Mammary epithelial cell (primary cell): ENCODE measurements at regions of chr19 and their contacts with region 1.

Region 1: DNA sequence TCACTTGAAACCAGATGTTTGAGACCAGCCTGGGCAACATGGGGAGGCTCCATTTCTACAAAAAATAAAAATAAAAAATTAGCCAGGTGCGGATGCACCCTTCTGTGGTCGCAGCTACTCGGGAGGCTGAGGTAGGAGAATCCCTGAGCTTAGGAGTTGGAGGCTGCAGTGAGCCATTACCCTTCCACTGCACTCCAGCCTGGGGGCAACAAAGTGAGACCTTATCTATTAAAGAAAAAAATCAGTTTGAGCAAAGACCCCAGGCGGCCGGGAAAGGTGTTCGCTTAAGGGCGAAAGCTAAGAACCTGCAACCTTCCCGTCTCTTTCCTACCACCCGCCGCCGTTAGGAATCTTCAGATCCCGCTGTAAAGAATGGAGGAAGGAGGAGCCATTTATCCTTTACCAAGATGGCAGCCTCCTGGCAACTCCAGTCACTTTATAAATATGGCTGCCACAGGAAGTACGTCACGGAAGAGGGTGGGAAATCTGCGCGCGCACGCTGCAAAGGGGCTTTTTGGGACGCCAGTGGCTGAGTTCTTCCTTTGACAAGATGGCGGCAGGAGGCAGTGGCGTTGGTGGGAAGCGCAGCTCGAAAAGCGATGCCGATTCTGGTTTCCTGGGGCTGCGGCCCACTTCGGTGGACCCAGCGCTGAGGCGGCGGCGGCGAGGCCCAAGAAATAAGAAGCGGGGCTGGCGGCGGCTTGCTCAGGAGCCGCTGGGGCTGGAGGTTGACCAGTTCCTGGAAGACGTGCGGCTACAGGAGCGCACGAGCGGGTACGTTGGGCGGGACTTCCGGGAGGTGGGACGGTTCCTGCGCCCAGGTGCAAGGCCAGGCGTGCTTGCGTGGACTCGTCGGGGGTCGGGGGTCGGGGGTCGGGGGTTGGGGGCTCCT is at the start of gene NOP53:
- DNase-seq: peak; percentile 94
- H3K4me3 ChIP-seq: peak within 1 kb of the TSS; percentile 63 to 84 (median 76)
- H3K27ac ChIP-seq: peak within 1 kb of the TSS; percentile 72
- H3K4me1 ChIP-seq: peaks cover 19% of the 10 kb centered on the region
- H3K27me3 ChIP-seq: no peaks in the 10 kb centered on the region
- CTCF ChIP-seq: no peak
- total RNA-seq, gene NOP53: 87.4 to 106 TPM

Region 2: GRCh38 chr19:47697863-47698609 is 47.2 kb before region 1 on chr19:
- CTCF ChIA-PET with region 1: no interaction called
- dilution Hi-C with region 1: no loop called
- in situ Hi-C with region 1: no loop called
- intact Hi-C with region 1: no loop called
- DNase-seq: peak; percentile 72
- H3K4me3 ChIP-seq: no peak overlapping the region
- H3K27ac ChIP-seq: no peak overlapping the region
- H3K4me1 ChIP-seq: no peaks in the 10 kb centered on the region
- H3K27me3 ChIP-seq: no peaks in the 10 kb centered on the region
- CTCF ChIP-seq: peak; percentile 99

Region 3: DNA sequence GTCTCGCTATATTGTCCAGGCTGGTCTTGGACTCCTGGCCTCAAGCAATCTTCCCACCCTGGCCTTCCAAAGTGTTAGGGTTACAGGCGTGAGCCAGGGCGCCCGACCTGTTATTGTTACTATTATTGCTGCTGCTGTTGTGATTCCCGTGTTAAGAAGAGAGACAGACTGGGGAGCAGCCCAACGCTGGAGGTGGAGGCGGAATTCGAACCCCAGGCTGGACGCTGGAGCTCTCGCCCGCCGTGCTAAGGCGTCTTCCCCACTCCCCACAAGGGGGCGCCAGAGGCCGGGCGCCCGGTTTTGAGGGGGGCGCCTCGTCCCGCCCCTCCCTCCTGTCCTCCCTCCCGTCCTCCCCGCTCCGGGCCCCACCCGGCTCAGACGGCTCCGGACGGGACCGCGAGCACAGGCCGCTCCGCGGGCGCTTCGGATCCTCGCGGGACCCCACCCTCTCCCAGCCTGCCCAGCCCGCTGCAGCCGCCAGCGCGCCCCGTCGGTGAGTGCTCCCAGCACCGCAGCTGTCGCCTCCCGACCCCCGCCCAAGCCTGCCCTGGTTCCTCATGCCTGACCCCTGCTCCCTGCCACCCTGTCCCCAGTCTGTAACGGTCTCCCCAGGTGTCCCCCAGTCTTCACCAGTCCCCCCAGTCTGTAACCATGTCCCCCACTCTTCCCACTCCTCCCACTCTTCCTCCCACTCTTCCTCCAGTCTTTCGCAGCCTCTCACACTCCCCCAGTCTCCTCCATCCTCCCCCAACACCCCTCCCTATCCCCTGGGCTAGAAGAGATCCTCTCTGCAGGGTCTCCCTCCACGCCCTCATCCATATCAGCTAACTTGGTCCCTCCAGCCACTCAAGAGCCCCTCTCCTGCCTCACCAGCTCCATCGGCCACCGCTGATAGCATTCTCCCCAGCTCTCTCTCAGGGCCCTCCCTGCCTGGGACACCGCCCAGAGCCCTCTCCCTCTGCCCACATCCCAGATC is 31.9 kb before region 1 on chr19 and contains the start of gene EHD2:
- CTCF ChIA-PET with region 1: interaction called, 3 read pairs
- dilution Hi-C with region 1: no loop called
- in situ Hi-C with region 1: loop called in 1 of 2 experiments (anchors 5 kb)
- intact Hi-C with region 1: loop called (anchors 1 kb)
- DNase-seq: peak; percentile 68
- H3K4me3 ChIP-seq: peak within 1 kb of the TSS; percentile 84 to 97 (median 84)
- H3K27ac ChIP-seq: peak within 1 kb of the TSS; percentile 58
- H3K4me1 ChIP-seq: peaks cover 17% of the 10 kb centered on the region
- H3K27me3 ChIP-seq: no peaks in the 10 kb centered on the region
- CTCF ChIP-seq: peak; percentile 62 to 96
- total RNA-seq, gene EHD2: 111 to 178 TPM

Region 4: DNA sequence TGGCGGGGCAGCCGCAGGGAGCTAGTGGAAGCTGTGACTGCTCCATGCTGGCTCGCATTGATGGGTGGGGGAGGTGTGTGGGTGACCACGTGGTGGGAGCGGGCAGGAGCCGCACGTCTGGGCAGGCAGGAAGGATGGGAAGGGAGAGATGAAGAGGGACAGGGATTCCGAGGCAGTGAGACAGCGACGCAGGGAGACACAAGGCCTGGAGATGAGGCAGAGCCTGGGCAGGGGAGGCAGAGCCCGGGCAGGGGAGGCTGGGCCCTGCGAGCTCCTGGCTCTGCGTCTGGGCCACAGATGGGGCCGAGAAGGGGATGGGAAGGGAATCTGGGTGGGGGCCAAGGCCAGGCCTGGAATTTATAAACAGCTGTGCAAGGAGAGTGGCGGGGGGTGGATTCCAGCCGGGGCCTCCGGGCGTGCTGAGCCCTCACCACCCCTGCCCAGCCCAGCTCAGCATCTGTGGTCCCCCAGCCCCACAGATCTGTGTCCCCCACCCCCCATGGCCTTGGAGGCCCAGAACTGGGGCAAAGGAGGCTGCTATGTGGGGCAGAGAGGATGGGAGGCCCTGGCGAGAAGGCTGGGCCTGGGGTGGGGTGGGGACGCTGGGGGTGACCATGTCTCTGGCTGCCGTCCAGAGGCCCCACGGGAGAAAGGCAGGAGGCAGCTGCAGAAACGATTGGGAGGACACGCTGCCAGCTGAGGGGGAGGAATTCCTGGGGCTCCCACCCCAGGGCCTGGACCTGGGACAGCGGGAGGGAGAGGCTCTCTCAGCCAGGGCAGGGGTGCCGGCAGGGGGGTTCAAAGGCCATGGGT is 26.0 kb before region 1 on chr19:
- CTCF ChIA-PET with region 1: interaction called, 5 read pairs
- dilution Hi-C with region 1: no loop called
- in situ Hi-C with region 1: loop called in 1 of 2 experiments (anchors 5 kb)
- intact Hi-C with region 1: loop called (anchors 1 kb)
- DNase-seq: peak; percentile 95
- H3K4me3 ChIP-seq: peak overlapping the region; percentile 0 to 36 (median 32)
- H3K27ac ChIP-seq: peak overlapping the region; percentile 65
- H3K4me1 ChIP-seq: peaks cover 42% of the 10 kb centered on the region
- H3K27me3 ChIP-seq: no peaks in the 10 kb centered on the region
- CTCF ChIP-seq: no peak

Region 5: DNA sequence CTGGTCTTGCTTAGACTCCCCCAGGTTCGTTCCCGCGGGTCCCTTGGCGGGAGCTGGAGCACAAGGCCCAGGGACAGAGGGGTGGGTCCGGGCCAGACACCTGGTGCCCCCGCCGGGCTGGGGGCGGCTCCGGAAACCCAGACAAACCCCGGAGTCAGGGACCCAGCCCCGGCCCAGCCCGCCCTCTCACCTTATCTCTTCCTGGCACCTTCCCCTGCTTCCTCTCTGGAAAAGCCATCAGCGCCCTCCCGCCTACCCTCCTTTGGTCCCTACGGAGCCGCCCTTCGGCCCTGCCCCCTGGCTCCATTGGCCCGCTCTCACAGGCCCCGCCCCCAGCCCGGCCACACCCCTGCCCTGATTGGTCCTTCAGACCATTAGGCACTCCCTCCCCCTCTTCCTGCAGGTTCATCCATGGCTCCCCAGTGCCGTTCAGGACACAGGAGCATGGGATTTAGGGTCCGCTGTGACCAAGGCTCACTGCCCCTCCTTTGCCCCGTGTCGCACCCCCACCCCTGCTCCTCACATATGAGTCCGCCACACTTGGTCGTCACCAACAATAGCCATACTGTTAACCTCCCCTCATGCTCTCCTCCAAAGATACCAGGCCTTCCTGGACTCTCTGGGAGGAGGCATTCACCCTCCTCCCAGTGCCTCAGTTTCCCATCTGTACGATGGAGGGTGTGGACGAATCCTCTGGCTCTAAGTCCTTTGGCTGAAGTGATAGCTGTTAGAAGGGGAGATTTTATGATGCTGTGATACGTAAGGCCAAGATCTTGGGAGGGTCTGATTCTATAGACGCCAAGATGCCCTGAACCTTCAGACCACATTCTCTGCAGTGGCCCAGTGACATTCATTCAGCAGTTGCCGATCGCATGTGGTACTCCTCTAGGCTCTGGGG is 15.0 kb before region 1 on chr19:
- CTCF ChIA-PET with region 1: no interaction called
- dilution Hi-C with region 1: no loop called
- in situ Hi-C with region 1: no loop called
- intact Hi-C with region 1: loop called (anchors 1 kb)
- DNase-seq: peak; percentile 52
- H3K4me3 ChIP-seq: peak overlapping the region; percentile 42 to 49 (median 45)
- H3K27ac ChIP-seq: peak overlapping the region; percentile 77
- H3K4me1 ChIP-seq: peaks cover 42% of the 10 kb centered on the region
- H3K27me3 ChIP-seq: no peaks in the 10 kb centered on the region
- CTCF ChIP-seq: no peak

Region 6: DNA sequence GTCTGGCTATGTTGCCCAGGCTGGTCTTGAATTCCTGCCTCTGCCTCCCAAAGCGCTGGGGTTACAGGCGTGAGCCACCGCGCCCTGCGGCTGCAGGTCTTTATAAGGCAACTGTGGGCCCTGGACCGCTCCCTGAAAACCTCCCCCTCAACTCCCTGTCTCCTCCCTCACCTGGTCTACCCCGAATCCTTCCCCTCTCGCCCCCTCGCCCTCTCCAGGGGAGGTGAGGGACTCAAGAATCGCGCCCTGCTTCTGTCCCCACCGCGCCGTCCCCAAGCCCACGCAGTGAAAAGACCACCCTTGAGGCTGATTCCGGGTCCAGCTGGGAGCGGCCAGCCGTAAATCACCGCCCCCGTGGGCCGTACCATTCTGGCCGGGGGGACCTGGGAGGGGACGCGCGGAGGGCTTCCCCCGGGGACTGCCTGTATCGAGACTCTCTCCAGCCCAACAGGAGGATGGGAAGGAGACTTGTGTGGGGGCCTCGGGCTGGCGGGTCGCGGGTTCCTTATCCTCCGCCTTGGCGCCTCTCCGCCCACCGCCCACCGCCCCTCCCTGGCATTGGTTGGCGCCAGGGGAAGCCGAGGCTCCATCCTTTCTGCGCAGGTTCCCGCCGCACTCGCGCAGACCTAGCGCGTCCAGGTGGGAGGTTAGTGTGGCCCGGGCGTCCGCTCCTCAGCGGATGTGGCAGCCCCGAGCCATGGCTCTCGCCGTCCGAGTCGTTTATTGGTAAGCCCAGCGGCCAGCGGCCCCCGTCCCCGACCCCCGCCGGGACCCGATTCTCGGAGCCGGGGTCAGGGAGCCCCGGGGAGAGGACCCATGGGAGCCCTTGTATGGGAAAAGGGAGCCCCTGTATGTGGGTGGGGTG is 33.1 kb after region 1 on chr19 and contains the start of gene SELENOW:
- CTCF ChIA-PET with region 1: no interaction called
- dilution Hi-C with region 1: no loop called
- in situ Hi-C with region 1: no loop called
- intact Hi-C with region 1: loop called (anchors 1 kb)
- DNase-seq: peak; percentile 81
- H3K4me3 ChIP-seq: peak within 1 kb of the TSS; percentile 84 to 94 (median 88)
- H3K27ac ChIP-seq: peak within 1 kb of the TSS; percentile 88
- H3K4me1 ChIP-seq: peaks cover 7% of the 10 kb centered on the region
- H3K27me3 ChIP-seq: no peaks in the 10 kb centered on the region
- CTCF ChIP-seq: no peak
- total RNA-seq, gene SELENOW: 262 to 392 TPM